Activated CD8-positive, alpha-beta T cell treated with anti-CD3 and anti-CD28 coated beads for 36 hours (primary cell): ENCODE measurements at regions of chr16 and their contacts with region 1.

Region 1: DNA sequence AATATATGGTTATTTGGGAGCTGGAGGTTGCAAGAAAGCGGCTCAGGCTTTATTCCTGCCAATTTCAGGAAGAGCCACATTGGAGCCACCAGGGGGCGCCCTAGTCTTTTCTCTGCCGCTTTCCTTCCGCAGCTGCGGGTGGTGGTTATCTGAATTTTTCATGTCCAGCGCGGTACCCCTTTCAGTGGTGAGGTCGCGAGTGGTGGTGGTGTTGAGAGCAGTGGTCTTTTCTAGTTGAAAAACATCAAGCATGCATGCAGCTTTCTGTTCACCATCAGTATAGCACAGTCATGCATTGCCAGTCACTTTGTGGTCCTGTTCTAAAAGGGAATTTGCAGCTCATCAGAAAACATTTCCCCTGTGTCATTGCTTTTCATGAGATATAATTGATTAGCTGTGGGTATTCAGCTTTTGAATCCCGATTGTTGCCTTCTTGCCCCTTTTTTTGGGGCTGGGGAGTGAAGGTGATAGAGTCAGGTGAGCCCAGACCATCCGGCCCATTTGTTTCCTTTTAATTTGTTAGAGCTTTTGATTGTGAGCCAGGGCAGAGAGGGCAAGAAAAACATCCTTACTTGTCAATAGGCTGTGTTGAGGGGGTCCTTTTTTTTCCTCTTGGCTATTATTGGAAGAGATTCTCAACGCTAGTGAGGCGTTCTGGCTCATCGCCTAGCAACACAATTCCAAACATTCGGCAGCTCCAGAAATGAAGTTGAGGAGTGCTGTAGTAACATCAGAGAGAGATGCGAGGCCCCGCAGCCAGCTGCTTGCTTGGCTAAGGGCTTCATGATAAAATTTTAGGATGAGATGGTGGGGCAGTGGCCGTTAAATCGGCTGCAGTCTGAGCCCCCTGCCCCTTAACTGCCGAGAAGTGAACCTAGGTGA is 119.0 kb downstream of the SNX29 start:
- DNase-seq: peak; percentile 80
- ATAC-seq: peak; percentile 34
- H3K4me3 Mint-ChIP-seq: peak overlapping the region; percentile 37
- H3K27ac Mint-ChIP-seq: no peak overlapping the region
- H3K4me1 Mint-ChIP-seq: peaks cover 13% of the 10 kb centered on the region
- H3K27me3 Mint-ChIP-seq: no peaks in the 10 kb centered on the region
- CTCF ChIP-seq: peak; percentile 98

Region 2: DNA sequence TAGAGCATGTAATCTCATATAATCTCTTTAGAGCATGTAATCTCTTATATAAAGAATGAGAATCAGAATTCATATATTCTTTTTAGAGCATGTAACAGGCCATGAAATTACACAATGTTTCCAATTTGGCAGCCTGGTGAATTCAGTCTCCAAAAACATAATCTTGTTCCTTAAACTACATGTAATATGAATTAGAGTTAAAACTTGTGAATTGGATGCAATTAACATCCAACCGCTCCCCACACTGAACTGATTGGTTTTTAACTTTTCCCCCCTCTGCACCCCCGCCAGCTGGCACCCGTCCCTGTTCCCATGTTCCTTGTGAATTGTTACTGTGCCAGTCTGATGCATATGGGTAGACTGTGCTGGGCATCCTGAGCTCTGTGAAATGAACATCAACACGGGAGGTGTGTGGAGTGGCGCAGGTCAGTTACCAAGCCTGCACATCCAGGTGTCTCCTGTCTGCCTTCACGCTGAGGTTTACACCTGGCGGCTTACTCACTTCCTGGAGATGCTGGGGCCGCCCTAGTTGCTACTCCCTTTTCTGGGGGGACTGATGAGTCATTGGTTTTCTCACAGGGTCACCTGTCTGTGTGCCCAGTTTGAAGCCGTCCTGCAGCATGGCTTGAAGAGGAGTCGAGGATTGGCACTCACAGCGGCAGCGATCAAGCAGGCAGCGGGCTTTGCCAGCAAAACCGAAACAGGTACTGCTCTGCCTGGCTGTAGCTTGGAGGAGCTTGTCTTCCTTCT is 68.6 kb before region 1 on chr16:
- CTCF ChIA-PET with region 1: no interaction called
- POLR2A ChIA-PET with region 1: no interaction called
- intact Hi-C with region 1: no loop called
- DNase-seq: peak; percentile 7
- ATAC-seq: no peak
- H3K4me3 Mint-ChIP-seq: no peak overlapping the region
- H3K27ac Mint-ChIP-seq: no peak overlapping the region
- H3K4me1 Mint-ChIP-seq: peaks cover 5% of the 10 kb centered on the region
- H3K27me3 Mint-ChIP-seq: no peaks in the 10 kb centered on the region
- CTCF ChIP-seq: no peak

Region 3: GRCh38 chr16:12062343-12063005 is 33.0 kb before region 1 on chr16:
- CTCF ChIA-PET with region 1: interaction called, 25 read pairs
- POLR2A ChIA-PET with region 1: no interaction called
- intact Hi-C with region 1: no loop called
- DNase-seq: no peak
- ATAC-seq: no peak
- H3K4me3 Mint-ChIP-seq: no peak overlapping the region
- H3K27ac Mint-ChIP-seq: no peak overlapping the region
- H3K4me1 Mint-ChIP-seq: peaks cover 22% of the 10 kb centered on the region
- H3K27me3 Mint-ChIP-seq: no peaks in the 10 kb centered on the region
- CTCF ChIP-seq: no peak

Region 4: GRCh38 chr16:12079412-12079965 is 16.0 kb before region 1 on chr16:
- CTCF ChIA-PET with region 1: interaction called, 48 read pairs
- POLR2A ChIA-PET with region 1: interaction called, 7 read pairs
- intact Hi-C with region 1: no loop called
- DNase-seq: no peak
- ATAC-seq: no peak
- H3K4me3 Mint-ChIP-seq: peak overlapping the region; percentile 72
- H3K27ac Mint-ChIP-seq: peak overlapping the region; percentile 99
- H3K4me1 Mint-ChIP-seq: peaks cover 77% of the 10 kb centered on the region
- H3K27me3 Mint-ChIP-seq: no peaks in the 10 kb centered on the region
- CTCF ChIP-seq: no peak

Region 5: DNA sequence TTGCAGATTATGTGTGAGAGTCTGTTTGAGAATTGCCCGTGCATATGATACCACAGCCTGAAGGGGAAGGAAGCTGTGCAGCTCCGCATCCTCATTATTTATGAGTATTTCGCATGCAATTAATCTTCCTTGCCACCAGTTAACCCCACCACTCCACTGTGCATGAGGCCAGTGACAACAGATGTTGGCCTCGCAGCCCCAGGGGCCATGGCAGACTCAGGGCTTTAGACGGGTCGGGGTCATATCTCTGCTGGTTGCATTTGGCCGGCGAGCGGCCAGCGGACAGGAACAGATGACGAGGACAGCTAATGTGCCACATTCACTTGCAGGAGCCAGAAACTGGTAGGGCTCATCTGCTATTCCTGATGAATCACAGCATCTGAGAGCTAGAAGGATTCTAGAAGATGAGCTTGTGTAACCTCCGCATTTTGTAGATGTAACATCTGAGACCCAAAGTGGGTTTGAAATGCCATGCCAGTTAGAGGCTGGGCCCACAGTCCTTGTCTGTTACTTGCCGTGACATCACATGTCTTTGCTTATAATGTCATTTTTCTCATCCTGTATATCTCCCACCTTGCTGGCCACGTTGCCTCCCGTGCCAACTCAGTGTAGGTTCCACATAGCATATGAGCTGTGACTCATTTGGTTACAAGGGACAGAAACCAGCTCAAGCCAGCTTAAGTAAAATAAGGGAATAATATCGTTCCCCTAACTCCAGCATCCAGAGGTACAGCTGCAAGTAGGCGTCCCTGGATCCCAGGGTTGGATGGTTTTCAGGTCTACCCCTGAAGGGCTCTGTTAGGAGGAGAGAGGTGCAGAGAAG is 18.2 kb after region 1 on chr16:
- CTCF ChIA-PET with region 1: interaction called, 11 read pairs
- POLR2A ChIA-PET with region 1: no interaction called
- intact Hi-C with region 1: no loop called
- DNase-seq: no peak
- ATAC-seq: no peak
- H3K4me3 Mint-ChIP-seq: no peak overlapping the region
- H3K27ac Mint-ChIP-seq: no peak overlapping the region
- H3K4me1 Mint-ChIP-seq: no peaks in the 10 kb centered on the region
- H3K27me3 Mint-ChIP-seq: no peaks in the 10 kb centered on the region
- CTCF ChIP-seq: no peak

Region 6: GRCh38 chr16:12124742-12125141 is 29.2 kb after region 1 on chr16:
- CTCF ChIA-PET with region 1: interaction called, 15 read pairs
- POLR2A ChIA-PET with region 1: no interaction called
- intact Hi-C with region 1: no loop called
- DNase-seq: no peak
- ATAC-seq: no peak
- H3K4me3 Mint-ChIP-seq: peak overlapping the region; percentile 13
- H3K27ac Mint-ChIP-seq: peak overlapping the region; percentile 7
- H3K4me1 Mint-ChIP-seq: peaks cover 14% of the 10 kb centered on the region
- H3K27me3 Mint-ChIP-seq: no peaks in the 10 kb centered on the region
- CTCF ChIP-seq: no peak

Region 7: GRCh38 chr16:12147681-12148080 is 52.2 kb after region 1 on chr16:
- CTCF ChIA-PET with region 1: interaction called, 10 read pairs
- POLR2A ChIA-PET with region 1: interaction called, 3 read pairs
- intact Hi-C with region 1: no loop called
- DNase-seq: no peak
- ATAC-seq: peak; percentile 37
- H3K4me3 Mint-ChIP-seq: no peak overlapping the region
- H3K27ac Mint-ChIP-seq: no peak overlapping the region
- H3K4me1 Mint-ChIP-seq: peaks cover 20% of the 10 kb centered on the region
- H3K27me3 Mint-ChIP-seq: no peaks in the 10 kb centered on the region
- CTCF ChIP-seq: no peak

Region 8: GRCh38 chr16:12184419-12184917 is 89.0 kb after region 1 on chr16:
- CTCF ChIA-PET with region 1: no interaction called
- POLR2A ChIA-PET with region 1: no interaction called
- intact Hi-C with region 1: no loop called
- DNase-seq: no peak
- ATAC-seq: no peak
- H3K4me3 Mint-ChIP-seq: no peak overlapping the region
- H3K27ac Mint-ChIP-seq: no peak overlapping the region
- H3K4me1 Mint-ChIP-seq: no peaks in the 10 kb centered on the region
- H3K27me3 Mint-ChIP-seq: no peaks in the 10 kb centered on the region
- CTCF ChIP-seq: no peak

Region 9: GRCh38 chr16:12228602-12229499 is 133.3 kb after region 1 on chr16:
- CTCF ChIA-PET with region 1: interaction called, 18 read pairs
- POLR2A ChIA-PET with region 1: interaction called, 3 read pairs
- intact Hi-C with region 1: no loop called
- DNase-seq: peak; percentile 49
- ATAC-seq: peak; percentile 47
- H3K4me3 Mint-ChIP-seq: no peak overlapping the region
- H3K27ac Mint-ChIP-seq: no peak overlapping the region
- H3K4me1 Mint-ChIP-seq: peaks cover 7% of the 10 kb centered on the region
- H3K27me3 Mint-ChIP-seq: no peaks in the 10 kb centered on the region
- CTCF ChIP-seq: no peak